ENCODE measurements at regions of chr7 and their contacts with region 1.

Region 1: GRCh38 chr7:118183786-118184564 is at the start of gene LSM8:
- DNase-seq: peak; percentile 97
- H3K4me3 Mint-ChIP-seq: peak within 1 kb of the TSS; percentile 99
- H3K27ac Mint-ChIP-seq: peak within 1 kb of the TSS; percentile 100
- H3K4me1 Mint-ChIP-seq: peaks cover 30% of the 10 kb centered on the region
- H3K27me3 Mint-ChIP-seq: no peaks in the 10 kb centered on the region
- total RNA-seq, gene LSM8: 46.8 and 50.3 TPM in 2 replicates

Region 2: DNA sequence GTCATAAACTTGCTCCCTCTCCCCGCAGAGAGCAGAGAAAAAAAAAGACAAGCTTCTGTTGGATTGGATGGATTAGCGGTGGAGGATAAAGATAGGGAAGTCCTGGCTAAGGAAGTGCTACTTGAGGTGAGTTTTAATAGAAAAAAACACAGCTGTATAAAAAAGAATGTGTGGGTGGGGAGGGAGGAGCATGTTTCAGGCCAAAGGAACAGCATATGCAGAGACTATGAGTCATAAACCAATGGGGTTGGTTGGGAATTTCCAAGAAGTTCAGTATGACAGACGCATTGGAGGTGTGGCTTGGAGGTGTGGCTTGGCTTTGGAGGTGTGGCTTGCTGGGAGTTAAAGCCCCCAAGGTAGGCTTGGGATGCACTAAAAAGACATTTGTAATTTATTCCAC is 103.0 kb before region 1 on chr7:
- intact Hi-C with region 1: loop called (anchors 2 kb)
- DNase-seq: no peak
- H3K4me3 Mint-ChIP-seq: no peak overlapping the region
- H3K27ac Mint-ChIP-seq: peak overlapping the region; percentile 53
- H3K4me1 Mint-ChIP-seq: peaks cover 26% of the 10 kb centered on the region
- H3K27me3 Mint-ChIP-seq: peaks cover 3% of the 10 kb centered on the region

Region 3: GRCh38 chr7:118195837-118196474 is 12.0 kb after region 1 on chr7:
- intact Hi-C with region 1: loop called (anchors 1 kb)
- DNase-seq: no peak
- H3K4me3 Mint-ChIP-seq: no peak overlapping the region
- H3K27ac Mint-ChIP-seq: no peak overlapping the region
- H3K4me1 Mint-ChIP-seq: peaks cover 9% of the 10 kb centered on the region
- H3K27me3 Mint-ChIP-seq: no peaks in the 10 kb centered on the region

Region 4: GRCh38 chr7:118214051-118214832 is 30.3 kb after region 1 on chr7:
- intact Hi-C with region 1: loop called (anchors 1 kb)
- DNase-seq: peak; percentile 49
- H3K4me3 Mint-ChIP-seq: peak overlapping the region; percentile 78
- H3K27ac Mint-ChIP-seq: no peak overlapping the region
- H3K4me1 Mint-ChIP-seq: peaks cover 14% of the 10 kb centered on the region
- H3K27me3 Mint-ChIP-seq: peaks cover 31% of the 10 kb centered on the region

Measured in activated T-helper 2 cell treated with anti-CD3 and anti-CD28 coated beads, Interferon-gamma antibody, Interleukin-2, Interleukin-4, amounts not matched to agents 10 μg/mL and 5 μg/mL and 100 μg/mL, durations not matched to agents 14 hours and 24 hours and 36 hours (primary cell).